ENCODE measurements at regions of chr1 and their contacts with region 1.

Region 1: DNA sequence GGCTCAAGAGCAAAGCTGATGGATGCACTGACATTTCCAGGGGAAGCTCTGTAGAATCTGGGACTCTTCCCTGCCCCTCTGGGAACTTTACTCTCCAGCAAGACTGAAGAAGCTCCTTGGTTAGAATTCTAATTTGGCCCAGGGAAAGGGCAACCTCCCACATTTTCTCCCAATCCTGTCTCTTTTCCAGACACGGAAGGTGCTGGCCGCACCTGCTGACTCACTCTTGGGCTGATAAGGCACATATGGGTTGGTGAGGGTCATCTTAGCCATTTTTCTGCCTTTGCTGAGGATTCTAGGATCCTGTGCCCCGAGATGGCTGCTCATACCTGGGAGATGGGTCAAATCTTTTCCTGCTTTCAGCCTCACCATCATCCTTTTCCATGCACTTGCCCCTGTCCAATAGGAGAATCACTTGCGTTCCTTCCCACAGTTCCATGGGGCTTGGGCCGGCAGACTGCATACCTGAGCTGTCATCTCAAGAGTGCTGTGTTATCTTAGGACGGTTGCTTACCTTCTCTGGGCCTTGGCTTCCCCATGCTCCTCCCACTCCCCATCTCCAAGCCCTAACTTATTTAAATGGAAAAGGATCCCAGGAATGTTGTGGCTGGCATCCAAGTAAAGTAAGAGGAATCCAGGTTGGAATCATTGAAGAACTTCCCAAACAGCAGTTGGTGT is 1.3 kb downstream of the TINAGL1 start:
- DNase-seq: no peak
- ATAC-seq: no peak
- H3K4me3 ChIP-seq: no peak overlapping the region
- H3K4me3 Mint-ChIP-seq: no peak overlapping the region
- H3K27ac ChIP-seq: no peak overlapping the region
- H3K27ac Mint-ChIP-seq: no peak overlapping the region
- H3K4me1 ChIP-seq: peaks cover 0 to 6% of the 10 kb centered on the region in 2 experiments
- H3K4me1 Mint-ChIP-seq: peaks cover 0 to 13% (median 5%) of the 10 kb centered on the region in 3 donors
- H3K27me3 ChIP-seq: peaks cover 0 to 55% of the 10 kb centered on the region in 2 experiments
- H3K27me3 Mint-ChIP-seq: peaks cover 0 to 19% of the 10 kb centered on the region in 2 donors

Region 2: GRCh38 chr1:31605908-31606427 is 28.3 kb after region 1 on chr1:
- CTCF ChIA-PET with region 1: no interaction called
- POLR2A ChIA-PET with region 1: interaction called in 1 of 2 experiments, 12 read pairs
- DNase-seq: peak in 1 of 35 experiments; percentile 14
- ATAC-seq: no peak
- H3K4me3 ChIP-seq: no peak overlapping the region
- H3K4me3 Mint-ChIP-seq: no peak overlapping the region
- H3K27ac ChIP-seq: no peak overlapping the region
- H3K27ac Mint-ChIP-seq: no peak overlapping the region
- H3K4me1 ChIP-seq: no peaks in the 10 kb centered on the region
- H3K4me1 Mint-ChIP-seq: peaks cover 0 to 2% (median 0%) of the 10 kb centered on the region in 3 donors
- H3K27me3 ChIP-seq: peaks cover 0 to 2% of the 10 kb centered on the region in 2 experiments
- H3K27me3 Mint-ChIP-seq: peaks cover 0 to 5% of the 10 kb centered on the region in 2 donors